ENCODE measurements at regions of chr9 and their contacts with region 1.

Region 1: GRCh38 chr9:131733541-131734061 is 6.3 kb downstream of the RAPGEF1 start:
- DNase-seq: peak; percentile 94
- ATAC-seq: peak; percentile 88
- H3K4me3 ChIP-seq: peak overlapping the region; percentile 37; the same call in 1 of the 2 replicates
- H3K27ac ChIP-seq: peak overlapping the region; percentile 95
- H3K4me1 ChIP-seq: peaks cover 59% of the 10 kb centered on the region
- H3K27me3 ChIP-seq: no peaks in the 10 kb centered on the region
- CTCF ChIP-seq: no peak

Region 2: GRCh38 chr9:131678499-131679111 is 55.0 kb before region 1 on chr9:
- CTCF ChIA-PET with region 1: interaction called, 4 read pairs
- POLR2A ChIA-PET with region 1: interaction called, 11 read pairs
- intact Hi-C with region 1: loop called (anchors 1 kb)
- DNase-seq: peak; percentile 92
- ATAC-seq: peak; percentile 98
- H3K4me3 ChIP-seq: peak overlapping the region; percentile 31; the same call in 1 of the 2 replicates
- H3K27ac ChIP-seq: peak overlapping the region; percentile 75
- H3K4me1 ChIP-seq: peaks cover 39% of the 10 kb centered on the region
- H3K27me3 ChIP-seq: no peaks in the 10 kb centered on the region
- CTCF ChIP-seq: no peak